ENCODE measurements at regions of chr7 and their contacts with region 1.

Region 1: DNA sequence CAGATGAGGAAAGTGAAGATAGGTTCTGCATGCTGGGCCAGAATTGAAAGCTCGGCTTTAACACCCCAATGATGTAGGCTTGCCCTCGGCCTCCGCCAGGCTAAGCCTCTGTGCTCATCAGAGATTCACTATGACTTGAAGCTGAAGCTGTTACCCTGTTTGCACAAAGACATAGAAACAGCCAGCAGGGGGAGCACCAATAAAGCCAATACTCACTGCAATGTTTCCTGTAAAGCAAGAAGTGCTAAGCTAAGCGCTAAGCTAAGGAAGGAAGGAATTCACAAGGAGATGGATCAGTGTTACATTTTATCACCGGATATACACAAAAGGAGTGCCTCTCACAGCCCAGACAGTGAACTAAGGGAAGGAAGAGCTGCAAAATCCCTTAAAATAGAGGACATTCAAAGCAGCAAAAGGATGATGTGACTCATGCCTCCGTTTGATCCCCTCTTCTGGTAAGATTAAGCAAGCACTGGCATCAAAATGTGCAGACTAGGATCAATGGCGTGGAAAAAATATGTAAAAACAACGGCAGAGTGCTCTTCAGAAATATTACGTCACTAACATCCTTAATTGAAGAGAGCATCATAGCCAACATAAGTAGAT is 153.8 kb downstream of the COBL start:
- DNase-seq: no peak
- H3K4me3 ChIP-seq: no peak overlapping the region
- H3K27ac ChIP-seq: no peak overlapping the region
- H3K4me1 ChIP-seq: peaks cover 7% of the 10 kb centered on the region
- H3K27me3 ChIP-seq: no peaks in the 10 kb centered on the region
- CTCF ChIP-seq: peak; percentile 60 to 69 (median 64)
- POLR2A ChIP-seq: no peak

Region 2: DNA sequence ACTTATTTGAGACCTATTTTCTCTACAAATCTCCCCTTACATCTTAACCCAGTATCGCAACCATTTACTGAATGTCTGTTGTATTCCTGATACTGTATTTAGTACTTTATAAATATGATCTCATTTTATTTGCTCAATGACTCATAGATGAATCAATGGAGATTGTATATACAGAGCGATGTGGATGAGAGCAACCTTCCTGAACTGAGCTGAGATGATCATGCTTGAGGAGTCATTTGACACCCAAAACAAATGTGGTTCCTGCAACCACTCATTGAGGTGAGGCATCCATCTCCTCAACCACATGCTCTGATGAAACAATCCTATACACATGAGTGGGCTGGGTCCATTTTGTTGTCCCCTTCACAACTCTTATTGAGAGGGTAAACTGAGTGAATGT is 1988.4 kb before region 1 on chr7:
- intact Hi-C with region 1: no loop called
- DNase-seq: no peak
- H3K4me3 ChIP-seq: no peak overlapping the region
- H3K27ac ChIP-seq: no peak overlapping the region
- H3K4me1 ChIP-seq: no peaks in the 10 kb centered on the region
- H3K27me3 ChIP-seq: no peaks in the 10 kb centered on the region
- CTCF ChIP-seq: no peak
- POLR2A ChIP-seq: no peak

Region 3: GRCh38 chr7:50142425-50143017 is 1020.3 kb before region 1 on chr7:
- intact Hi-C with region 1: loop called (anchors 2 kb)
- DNase-seq: no peak
- H3K4me3 ChIP-seq: no peak overlapping the region
- H3K27ac ChIP-seq: no peak overlapping the region
- H3K4me1 ChIP-seq: no peaks in the 10 kb centered on the region
- H3K27me3 ChIP-seq: no peaks in the 10 kb centered on the region
- CTCF ChIP-seq: peak; percentile 33 to 52 (median 43)
- POLR2A ChIP-seq: no peak

Region 4: DNA sequence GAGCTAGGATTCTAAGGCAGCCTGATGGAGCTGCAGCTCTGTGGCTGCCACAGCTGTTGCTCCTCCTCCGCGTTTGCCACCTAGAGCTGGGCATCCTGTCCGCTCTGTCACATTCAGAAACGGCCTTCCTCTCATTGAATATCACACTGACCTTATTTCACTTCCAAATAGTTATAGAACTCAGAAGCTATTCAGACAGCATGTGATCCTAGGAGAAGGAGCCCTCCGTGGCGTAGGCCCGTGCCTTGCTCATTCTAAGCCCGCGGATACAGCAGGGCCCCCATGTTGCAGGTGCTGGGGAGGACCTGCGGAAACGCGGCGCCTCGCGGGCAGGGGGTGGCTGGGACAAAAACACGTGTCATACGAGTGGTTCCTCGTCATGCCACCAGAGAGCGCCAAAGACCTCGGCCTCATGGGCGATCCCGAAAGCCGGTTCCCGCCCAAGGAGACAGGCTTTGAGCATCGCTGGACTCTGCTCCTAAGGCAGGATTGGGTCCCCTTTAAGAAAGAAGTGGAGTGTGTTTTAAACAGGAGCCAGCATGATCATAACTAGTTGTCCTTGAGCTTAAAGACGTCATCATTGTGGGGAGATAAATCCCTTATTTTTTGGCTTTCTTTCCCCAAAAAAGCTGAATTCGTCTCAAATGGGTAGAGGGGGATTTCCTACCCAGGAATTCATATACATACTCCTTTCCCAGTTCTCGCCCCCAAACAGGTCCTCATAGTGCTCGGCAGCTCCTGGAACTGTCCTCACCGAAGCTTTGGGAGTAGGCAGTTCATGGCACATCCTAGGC is 694.8 kb before region 1 on chr7:
- intact Hi-C with region 1: loop called (anchors 5 kb)
- DNase-seq: no peak
- H3K4me3 ChIP-seq: peak overlapping the region in 1 of 2 donors; percentile 30
- H3K27ac ChIP-seq: no peak overlapping the region
- H3K4me1 ChIP-seq: no peaks in the 10 kb centered on the region
- H3K27me3 ChIP-seq: no peaks in the 10 kb centered on the region
- CTCF ChIP-seq: peak; percentile 79 to 95 (median 89)
- POLR2A ChIP-seq: no peak

Region 5: DNA sequence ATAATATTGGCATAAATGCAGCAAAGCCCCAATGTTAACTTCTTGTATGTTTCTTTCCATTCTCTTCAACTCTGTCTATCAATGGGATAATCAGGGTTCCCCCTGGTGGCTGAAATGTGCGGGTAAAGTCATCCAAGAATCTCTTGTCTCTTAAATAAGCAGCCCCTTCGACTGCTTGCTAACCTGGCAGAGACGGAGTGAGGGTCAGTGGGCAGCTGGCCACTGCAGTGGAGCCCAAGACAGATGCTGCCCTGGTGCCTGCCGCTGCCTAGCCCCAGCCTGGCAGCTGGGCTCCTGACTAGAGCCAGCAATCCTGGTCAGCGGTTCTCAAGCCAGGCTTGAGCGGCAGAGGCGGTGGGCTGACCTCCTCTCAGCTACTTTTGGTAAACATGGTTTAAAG is 95.1 kb before region 1 on chr7:
- intact Hi-C with region 1: no loop called
- DNase-seq: no peak
- H3K4me3 ChIP-seq: no peak overlapping the region
- H3K27ac ChIP-seq: no peak overlapping the region
- H3K4me1 ChIP-seq: no peaks in the 10 kb centered on the region
- H3K27me3 ChIP-seq: no peaks in the 10 kb centered on the region
- CTCF ChIP-seq: peak; percentile 19 to 69 (median 66)
- POLR2A ChIP-seq: no peak

Region 6: DNA sequence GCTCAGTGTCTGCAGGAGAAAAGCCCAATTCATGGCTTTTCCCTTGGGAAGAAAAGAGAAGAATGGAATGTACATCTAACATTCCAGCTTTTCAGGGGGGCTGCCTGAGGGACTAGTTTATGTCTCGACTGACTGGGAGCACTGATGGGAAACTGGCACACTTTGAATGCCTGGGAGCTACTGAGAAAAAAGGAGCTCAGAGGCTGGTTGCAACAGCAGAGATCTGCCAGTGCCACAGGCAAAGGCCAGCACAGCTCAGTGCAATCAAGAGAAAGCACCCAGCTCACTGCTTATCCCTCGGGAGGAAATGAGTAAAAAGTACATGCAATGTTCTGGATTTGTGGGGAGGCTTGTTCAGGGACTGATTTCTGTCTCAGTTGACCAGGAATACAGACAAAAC is 72.4 kb before region 1 on chr7:
- intact Hi-C with region 1: no loop called
- DNase-seq: no peak
- H3K4me3 ChIP-seq: no peak overlapping the region
- H3K27ac ChIP-seq: no peak overlapping the region
- H3K4me1 ChIP-seq: no peaks in the 10 kb centered on the region
- H3K27me3 ChIP-seq: no peaks in the 10 kb centered on the region
- CTCF ChIP-seq: no peak
- POLR2A ChIP-seq: no peak

Region 7: GRCh38 chr7:51366930-51367613 is 204.2 kb after region 1 on chr7:
- intact Hi-C with region 1: loop called (anchors 10 kb)
- DNase-seq: no peak
- H3K4me3 ChIP-seq: no peak overlapping the region
- H3K27ac ChIP-seq: no peak overlapping the region
- H3K4me1 ChIP-seq: no peaks in the 10 kb centered on the region
- H3K27me3 ChIP-seq: no peaks in the 10 kb centered on the region
- CTCF ChIP-seq: peak in 2 of 3 experiments; percentile 33 to 35
- POLR2A ChIP-seq: no peak

Measured in vagina (tissue), 2 donors.